GM12878 (cell line): ENCODE measurements at regions of chr10 and their contacts with region 1.

Region 1: GRCh38 chr10:73956476-73957359 is 41.2 kb upstream of the VCL start:
- DNase-seq: peak; percentile 66
- ATAC-seq: peak; percentile 72
- H3K4me3 ChIP-seq: peak overlapping the region; percentile 55
- H3K27ac ChIP-seq: peak overlapping the region; percentile 80
- H3K4me1 ChIP-seq: peaks cover 54% of the 10 kb centered on the region
- H3K27me3 ChIP-seq: no peaks in the 10 kb centered on the region
- CTCF ChIP-seq: no peak
- EP300 ChIP-seq: peak; percentile 56 to 79
- POLR2A ChIP-seq: no peak
- RAD21 ChIP-seq: no peak

Region 2: GRCh38 chr10:73625884-73626752 is 330.6 kb before region 1 on chr10:
- CTCF ChIA-PET with region 1: no interaction called
- POLR2A ChIA-PET with region 1: no interaction called
- RAD21 ChIA-PET with region 1: no interaction called
- SMC1A ChIA-PET with region 1: no interaction called
- in situ Hi-C with region 1: no loop called
- intact Hi-C with region 1: no loop called
- DNase-seq: peak; percentile 98
- ATAC-seq: peak; percentile 98
- H3K4me3 ChIP-seq: peak overlapping the region; percentile 87
- H3K27ac ChIP-seq: peak overlapping the region; percentile 95
- H3K4me1 ChIP-seq: peaks cover 5% of the 10 kb centered on the region
- H3K27me3 ChIP-seq: no peaks in the 10 kb centered on the region
- CTCF ChIP-seq: no peak
- EP300 ChIP-seq: 0 out of 4 replicates have a peak, but pooled peaks of 1 of the 2 experiments have one; percentile 10
- POLR2A ChIP-seq: peak; percentile 95
- RAD21 ChIP-seq: no peak

Region 3: GRCh38 chr10:73931767-73932619 is 24.7 kb before region 1 on chr10:
- CTCF ChIA-PET with region 1: interaction called, 7 read pairs
- POLR2A ChIA-PET with region 1: interaction called, 5 read pairs
- RAD21 ChIA-PET with region 1: interaction called, 13 read pairs
- SMC1A ChIA-PET with region 1: interaction called, 4 read pairs
- in situ Hi-C with region 1: no loop called
- intact Hi-C with region 1: no loop called
- DNase-seq: peak; percentile 50
- ATAC-seq: peak; percentile 89
- H3K4me3 ChIP-seq: no peak overlapping the region
- H3K27ac ChIP-seq: peak overlapping the region; percentile 68
- H3K4me1 ChIP-seq: peaks cover 13% of the 10 kb centered on the region
- H3K27me3 ChIP-seq: no peaks in the 10 kb centered on the region
- CTCF ChIP-seq: no peak
- EP300 ChIP-seq: 0 out of 4 replicates have a peak, but pooled peaks of 1 of the 2 experiments have one; percentile 41
- POLR2A ChIP-seq: 0 out of 2 replicates have a peak, but pooled peaks have one; percentile 27
- RAD21 ChIP-seq: 0 out of 2 replicates have a peak, but pooled peaks have one; percentile 11

Region 4: DNA sequence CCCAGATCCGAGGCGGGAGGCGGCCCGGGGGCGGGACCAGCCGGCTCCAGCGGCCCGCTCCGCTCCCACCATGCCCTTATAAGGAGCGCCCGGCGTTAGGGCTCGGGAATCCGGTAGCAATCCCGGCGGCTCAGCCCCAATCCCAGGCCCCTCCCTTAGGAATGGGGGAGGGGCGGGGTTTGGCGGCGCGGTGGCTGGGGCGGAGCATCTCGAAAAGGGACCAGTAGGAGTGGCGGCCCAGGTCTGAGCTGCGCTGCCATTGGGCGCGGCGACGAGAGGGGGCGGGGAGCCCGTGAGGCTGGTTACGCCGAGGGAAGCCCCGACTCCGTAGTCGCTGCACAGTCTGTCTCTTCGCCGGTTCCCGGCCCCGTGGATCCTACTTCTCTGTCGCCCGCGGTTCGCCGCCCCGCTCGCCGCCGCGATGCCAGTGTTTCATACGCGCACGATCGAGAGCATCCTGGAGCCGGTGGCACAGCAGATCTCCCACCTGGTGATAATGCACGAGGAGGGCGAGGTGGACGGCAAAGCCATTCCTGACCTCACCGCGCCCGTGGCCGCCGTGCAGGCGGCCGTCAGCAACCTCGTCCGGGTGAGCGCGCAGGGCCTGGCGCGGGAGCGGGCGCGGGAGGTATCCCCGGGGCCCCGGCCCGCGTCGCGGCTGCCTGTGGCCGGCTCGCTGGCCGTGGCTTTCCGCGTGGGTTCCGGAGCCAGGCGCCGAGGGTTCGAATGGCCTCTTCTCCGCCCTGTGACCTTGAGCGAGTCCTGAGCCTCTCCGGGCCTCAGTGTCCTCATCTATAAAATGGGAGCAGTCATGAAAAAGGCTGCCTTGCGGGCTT is 41.3 kb after region 1 on chr10 and contains the start of gene VCL:
- CTCF ChIA-PET with region 1: interaction called, 13 read pairs
- POLR2A ChIA-PET with region 1: interaction called, 6 read pairs
- RAD21 ChIA-PET with region 1: interaction called, 9 read pairs
- SMC1A ChIA-PET with region 1: interaction called, 9 read pairs
- in situ Hi-C with region 1: no loop called
- intact Hi-C with region 1: loop called (anchors 5 kb)
- DNase-seq: peak; percentile 64
- ATAC-seq: peak; percentile 99
- H3K4me3 ChIP-seq: peak within 1 kb of the TSS; percentile 86
- H3K27ac ChIP-seq: peak within 1 kb of the TSS; percentile 67
- H3K4me1 ChIP-seq: peaks cover 15% of the 10 kb centered on the region
- H3K27me3 ChIP-seq: no peaks in the 10 kb centered on the region
- CTCF ChIP-seq: no peak
- EP300 ChIP-seq: no peak
- POLR2A ChIP-seq: peak; percentile 92
- RAD21 ChIP-seq: no peak
- polyA plus RNA-seq, gene VCL: 6.7 to 9.2 TPM

Region 5: GRCh38 chr10:74058658-74059057 is 101.9 kb after region 1 on chr10:
- CTCF ChIA-PET with region 1: interaction called, 7 read pairs
- POLR2A ChIA-PET with region 1: interaction called, 10 read pairs
- RAD21 ChIA-PET with region 1: interaction called, 9 read pairs
- SMC1A ChIA-PET with region 1: interaction called, 9 read pairs
- in situ Hi-C with region 1: no loop called
- intact Hi-C with region 1: loop called (anchors 5 kb)
- DNase-seq: no peak
- ATAC-seq: peak; percentile 66
- H3K4me3 ChIP-seq: no peak overlapping the region
- H3K27ac ChIP-seq: no peak overlapping the region
- H3K4me1 ChIP-seq: peaks cover 23% of the 10 kb centered on the region
- H3K27me3 ChIP-seq: no peaks in the 10 kb centered on the region
- CTCF ChIP-seq: peak; percentile 4 to 44 (median 30); a peak in 3 of 6 replicates
- EP300 ChIP-seq: no peak
- POLR2A ChIP-seq: no peak
- RAD21 ChIP-seq: peak; percentile 77

Region 6: GRCh38 chr10:74103560-74104248 is 147.0 kb after region 1 on chr10:
- CTCF ChIA-PET with region 1: interaction called, 13 read pairs
- POLR2A ChIA-PET with region 1: no interaction called
- RAD21 ChIA-PET with region 1: interaction called, 5 read pairs
- SMC1A ChIA-PET with region 1: interaction called, 3 read pairs
- in situ Hi-C with region 1: no loop called
- intact Hi-C with region 1: loop called (anchors 5 kb)
- DNase-seq: no peak
- ATAC-seq: peak; percentile 85
- H3K4me3 ChIP-seq: no peak overlapping the region
- H3K27ac ChIP-seq: no peak overlapping the region
- H3K4me1 ChIP-seq: no peaks in the 10 kb centered on the region
- H3K27me3 ChIP-seq: no peaks in the 10 kb centered on the region
- CTCF ChIP-seq: peak; percentile 52 to 71 (median 67)
- EP300 ChIP-seq: no peak
- POLR2A ChIP-seq: no peak
- RAD21 ChIP-seq: peak; percentile 84

Region 7: DNA sequence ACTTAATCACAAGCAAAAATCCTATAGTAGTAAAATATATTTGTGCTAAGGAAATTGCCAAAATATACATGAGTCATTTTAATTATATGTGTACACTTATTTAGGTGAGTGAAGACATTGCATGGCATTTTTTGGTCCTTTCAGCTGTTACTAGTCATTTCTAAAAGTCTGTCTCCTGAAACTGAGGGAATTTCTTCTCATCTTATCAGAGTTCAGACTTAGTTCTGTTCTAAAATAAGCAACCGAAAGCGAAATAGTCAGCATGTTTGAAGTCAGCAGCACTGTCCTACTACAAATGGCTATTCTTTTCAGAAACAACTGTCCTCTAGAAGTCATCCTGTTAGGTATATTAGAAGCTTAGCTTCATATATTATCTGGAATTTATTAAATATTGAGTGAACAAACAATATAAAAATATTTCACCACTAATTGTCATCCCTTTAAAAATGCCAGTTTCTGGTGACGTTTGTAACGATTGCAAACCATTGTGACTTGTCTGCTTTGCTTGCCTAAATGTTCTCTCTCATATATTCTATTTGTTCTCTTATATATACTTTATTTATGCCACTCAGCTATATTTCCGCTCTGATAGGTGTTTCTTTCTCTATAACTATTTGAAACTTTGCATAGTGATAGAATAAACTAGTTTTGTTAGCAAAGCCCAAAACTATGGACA is 642.3 kb after region 1 on chr10:
- CTCF ChIA-PET with region 1: no interaction called
- POLR2A ChIA-PET with region 1: no interaction called
- RAD21 ChIA-PET with region 1: no interaction called
- SMC1A ChIA-PET with region 1: no interaction called
- in situ Hi-C with region 1: no loop called
- intact Hi-C with region 1: no loop called
- DNase-seq: peak; percentile 78
- ATAC-seq: peak; percentile 95
- H3K4me3 ChIP-seq: no peak overlapping the region
- H3K27ac ChIP-seq: peak overlapping the region; percentile 46
- H3K4me1 ChIP-seq: peaks cover 19% of the 10 kb centered on the region
- H3K27me3 ChIP-seq: no peaks in the 10 kb centered on the region
- CTCF ChIP-seq: no peak
- EP300 ChIP-seq: peak; percentile 75; a peak in 2 of 4 replicates
- POLR2A ChIP-seq: no peak
- RAD21 ChIP-seq: no peak